Endothelial cell of umbilical vein (primary cell): ENCODE measurements at regions of chr12 and their contacts with region 1.

Region 1: DNA sequence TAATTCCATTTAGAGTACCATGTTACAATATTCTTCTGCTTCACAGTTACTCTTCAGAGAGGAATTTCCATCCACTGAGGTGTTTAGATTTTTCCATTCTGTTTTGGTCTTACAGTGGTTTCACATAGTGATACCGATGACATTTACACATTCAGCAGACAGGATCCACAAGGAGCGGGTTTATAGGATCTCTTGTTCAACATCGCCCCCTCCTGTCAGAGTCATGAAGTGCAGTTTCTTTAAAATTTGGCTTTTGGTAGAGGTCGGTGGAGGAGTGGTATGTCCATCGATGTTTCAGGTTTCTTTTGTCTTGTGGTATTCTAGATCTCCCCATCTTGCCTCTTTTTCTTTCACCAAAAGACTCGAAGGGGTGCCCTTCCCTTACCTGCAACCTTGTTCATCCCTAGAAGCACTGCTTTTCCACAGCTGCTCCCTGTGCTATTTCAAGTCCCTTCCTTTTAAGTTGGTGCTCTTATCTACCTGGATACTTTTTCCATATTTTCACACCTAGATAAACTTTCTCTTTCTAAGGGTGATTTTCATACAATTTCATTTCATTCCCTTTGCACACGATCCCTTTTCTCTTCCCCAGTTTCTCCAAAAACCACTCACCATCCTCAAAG is 181.3 kb downstream of the ITPR2 start:
- DNase-seq: peak; percentile 75
- H3K4me3 ChIP-seq: no peak overlapping the region
- H3K27ac ChIP-seq: no peak overlapping the region
- H3K4me1 ChIP-seq: peaks cover 23% of the 10 kb centered on the region
- H3K27me3 ChIP-seq: no peaks in the 10 kb centered on the region
- CTCF ChIP-seq: peak; percentile 63 to 70
- POLR2A ChIP-seq: no peak

Region 2: GRCh38 chr12:26068503-26068902 is 583.2 kb before region 1 on chr12:
- CTCF ChIA-PET with region 1: no interaction called
- POLR2A ChIA-PET with region 1: no interaction called
- dilution Hi-C with region 1: no loop called
- intact Hi-C with region 1: no loop called
- DNase-seq: no peak
- H3K4me3 ChIP-seq: no peak overlapping the region
- H3K27ac ChIP-seq: no peak overlapping the region
- H3K4me1 ChIP-seq: no peaks in the 10 kb centered on the region
- H3K27me3 ChIP-seq: no peaks in the 10 kb centered on the region
- CTCF ChIP-seq: no peak
- POLR2A ChIP-seq: no peak

Region 3: DNA sequence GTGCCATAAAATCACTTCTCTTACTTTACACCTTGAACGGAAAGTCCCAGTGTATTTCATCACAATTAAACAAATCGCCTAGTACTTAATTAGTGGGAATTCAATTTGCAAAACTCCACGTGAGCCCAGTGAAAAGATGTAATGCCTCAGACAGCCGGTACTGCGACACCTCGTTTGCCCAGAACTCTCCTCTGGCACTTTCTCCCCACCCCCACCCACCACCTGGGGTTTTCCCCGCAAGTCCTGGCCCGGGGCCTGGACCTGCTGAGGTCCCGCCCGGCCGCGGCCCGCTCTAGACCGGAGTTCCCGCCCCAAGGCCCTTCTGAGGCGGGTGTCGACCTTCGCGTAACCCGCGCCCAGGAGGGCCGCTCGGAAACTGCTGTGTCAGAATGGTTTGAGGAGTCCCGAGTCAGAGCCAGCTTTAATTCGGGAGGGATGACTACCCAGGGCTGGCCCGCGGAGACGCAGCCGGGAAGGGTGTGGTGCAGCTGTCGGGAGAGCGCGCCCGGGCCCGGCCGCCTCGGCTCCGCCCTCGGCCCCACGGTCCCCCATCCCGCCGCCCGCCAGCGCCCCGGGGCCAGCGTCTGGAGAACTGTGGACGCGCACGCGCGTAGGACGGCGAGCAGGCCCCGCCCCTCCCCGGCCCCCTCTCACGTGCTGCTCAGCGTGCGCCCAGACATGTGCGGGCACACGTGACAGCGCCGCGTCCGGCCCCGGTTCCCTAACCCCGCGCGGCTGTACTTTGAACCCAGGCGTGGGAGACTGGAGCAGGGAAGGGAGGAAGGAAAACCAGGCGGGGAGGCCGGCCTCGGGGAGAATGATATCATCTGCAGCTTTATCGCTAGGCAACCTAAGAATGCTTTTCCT is 537.6 kb before region 1 on chr12:
- CTCF ChIA-PET with region 1: interaction called, 33 read pairs
- POLR2A ChIA-PET with region 1: no interaction called
- dilution Hi-C with region 1: no loop called
- intact Hi-C with region 1: loop called (anchors 2 kb)
- DNase-seq: peak; percentile 95
- H3K4me3 ChIP-seq: peak overlapping the region; percentile 44 to 61 (median 53)
- H3K27ac ChIP-seq: peak overlapping the region; percentile 65
- H3K4me1 ChIP-seq: peaks cover 13% of the 10 kb centered on the region
- H3K27me3 ChIP-seq: no peaks in the 10 kb centered on the region
- CTCF ChIP-seq: peak; percentile 27 to 28
- POLR2A ChIP-seq: no peak

Region 4: GRCh38 chr12:26126340-26127284 is 525.1 kb before region 1 on chr12:
- CTCF ChIA-PET with region 1: interaction called, 8 read pairs
- POLR2A ChIA-PET with region 1: no interaction called
- dilution Hi-C with region 1: no loop called
- intact Hi-C with region 1: loop called (anchors 1 kb)
- DNase-seq: peak; percentile 64
- H3K4me3 ChIP-seq: peak overlapping the region; percentile 39 to 64 (median 49)
- H3K27ac ChIP-seq: no peak overlapping the region
- H3K4me1 ChIP-seq: peaks cover 23% of the 10 kb centered on the region
- H3K27me3 ChIP-seq: peaks cover 35 to 60% of the 10 kb centered on the region in 2 experiments
- CTCF ChIP-seq: no peak
- POLR2A ChIP-seq: no peak

Region 5: GRCh38 chr12:26455936-26456574 is 195.6 kb before region 1 on chr12:
- CTCF ChIA-PET with region 1: no interaction called
- POLR2A ChIA-PET with region 1: no interaction called
- dilution Hi-C with region 1: no loop called
- intact Hi-C with region 1: no loop called
- DNase-seq: no peak
- H3K4me3 ChIP-seq: no peak overlapping the region
- H3K27ac ChIP-seq: no peak overlapping the region
- H3K4me1 ChIP-seq: peaks cover 11% of the 10 kb centered on the region
- H3K27me3 ChIP-seq: no peaks in the 10 kb centered on the region
- CTCF ChIP-seq: no peak
- POLR2A ChIP-seq: no peak

Region 6: GRCh38 chr12:26614020-26614616 is 37.6 kb before region 1 on chr12:
- CTCF ChIA-PET with region 1: interaction called, 17 read pairs
- POLR2A ChIA-PET with region 1: no interaction called
- dilution Hi-C with region 1: no loop called
- intact Hi-C with region 1: no loop called
- DNase-seq: peak; percentile 39
- H3K4me3 ChIP-seq: no peak overlapping the region
- H3K27ac ChIP-seq: no peak overlapping the region
- H3K4me1 ChIP-seq: no peaks in the 10 kb centered on the region
- H3K27me3 ChIP-seq: no peaks in the 10 kb centered on the region
- CTCF ChIP-seq: peak; percentile 50 to 52
- POLR2A ChIP-seq: no peak

Region 7: GRCh38 chr12:26691234-26691970 is 39.7 kb after region 1 on chr12:
- CTCF ChIA-PET with region 1: interaction called, 15 read pairs
- POLR2A ChIA-PET with region 1: no interaction called
- dilution Hi-C with region 1: no loop called
- intact Hi-C with region 1: loop called (anchors 2 kb)
- DNase-seq: peak; percentile 96
- H3K4me3 ChIP-seq: no peak overlapping the region
- H3K27ac ChIP-seq: peak overlapping the region; percentile 85
- H3K4me1 ChIP-seq: peaks cover 50% of the 10 kb centered on the region
- H3K27me3 ChIP-seq: no peaks in the 10 kb centered on the region
- CTCF ChIP-seq: no peak
- POLR2A ChIP-seq: peak; percentile 79

Region 8: GRCh38 chr12:26891704-26892103 is 240.0 kb after region 1 on chr12:
- CTCF ChIA-PET with region 1: no interaction called
- POLR2A ChIA-PET with region 1: no interaction called
- dilution Hi-C with region 1: no loop called
- intact Hi-C with region 1: no loop called
- DNase-seq: no peak
- H3K4me3 ChIP-seq: no peak overlapping the region
- H3K27ac ChIP-seq: no peak overlapping the region
- H3K4me1 ChIP-seq: no peaks in the 10 kb centered on the region
- H3K27me3 ChIP-seq: no peaks in the 10 kb centered on the region
- CTCF ChIP-seq: no peak
- POLR2A ChIP-seq: no peak